ENCODE measurements at regions of chr10 and their contacts with region 1.

Region 1: DNA sequence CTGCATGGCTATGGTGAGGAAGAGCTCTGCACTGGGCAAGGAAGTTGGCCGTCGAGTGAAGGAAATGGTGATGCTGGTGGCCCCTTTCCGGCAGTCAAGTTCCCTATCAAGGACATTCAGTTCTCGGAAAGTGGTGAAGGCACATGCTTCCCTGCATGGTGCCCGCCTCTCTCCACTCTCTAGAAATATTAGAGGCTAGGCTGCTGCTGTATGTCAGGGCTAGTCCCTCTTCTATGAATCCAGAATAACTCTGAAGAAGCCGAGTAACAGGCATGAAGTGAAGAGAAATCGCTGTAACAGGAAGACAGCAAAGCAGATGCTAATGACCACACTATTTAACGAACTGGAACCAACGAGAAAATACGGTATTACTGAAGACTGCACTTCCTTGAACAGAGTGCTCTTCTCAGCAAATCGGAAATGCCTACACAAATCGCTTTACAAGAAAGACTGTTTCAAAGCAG is 5.4 kb downstream of the IDI1 start:
- DNase-seq: peak; percentile 30
- ATAC-seq: peak; percentile 55
- H3K4me3 Mint-ChIP-seq: peak overlapping the region; percentile 58
- H3K27ac Mint-ChIP-seq: peak overlapping the region; percentile 79
- H3K4me1 Mint-ChIP-seq: peaks cover 39% of the 10 kb centered on the region
- H3K27me3 Mint-ChIP-seq: no peaks in the 10 kb centered on the region
- CTCF ChIP-seq: no peak

Region 2: GRCh38 chr10:909831-910230 is 133.7 kb before region 1 on chr10:
- CTCF ChIA-PET with region 1: no interaction called
- POLR2A ChIA-PET with region 1: no interaction called
- intact Hi-C with region 1: no loop called
- DNase-seq: no peak
- ATAC-seq: no peak
- H3K4me3 Mint-ChIP-seq: no peak overlapping the region
- H3K27ac Mint-ChIP-seq: no peak overlapping the region
- H3K4me1 Mint-ChIP-seq: peaks cover 27% of the 10 kb centered on the region
- H3K27me3 Mint-ChIP-seq: no peaks in the 10 kb centered on the region
- CTCF ChIP-seq: no peak

Region 3: GRCh38 chr10:1056326-1057105 is 13.0 kb after region 1 on chr10 and contains the start of gene WDR37:
- CTCF ChIA-PET with region 1: interaction called, 3 read pairs
- POLR2A ChIA-PET with region 1: interaction called, 17 read pairs
- intact Hi-C with region 1: no loop called
- DNase-seq: peak; percentile 90
- ATAC-seq: peak; percentile 95
- H3K4me3 Mint-ChIP-seq: peak within 1 kb of the TSS; percentile 97
- H3K27ac Mint-ChIP-seq: peak within 1 kb of the TSS; percentile 93
- H3K4me1 Mint-ChIP-seq: peaks cover 73% of the 10 kb centered on the region
- H3K27me3 Mint-ChIP-seq: no peaks in the 10 kb centered on the region
- CTCF ChIP-seq: no peak
- total RNA-seq, gene WDR37: 17.2 to 17.9 TPM

Region 4: DNA sequence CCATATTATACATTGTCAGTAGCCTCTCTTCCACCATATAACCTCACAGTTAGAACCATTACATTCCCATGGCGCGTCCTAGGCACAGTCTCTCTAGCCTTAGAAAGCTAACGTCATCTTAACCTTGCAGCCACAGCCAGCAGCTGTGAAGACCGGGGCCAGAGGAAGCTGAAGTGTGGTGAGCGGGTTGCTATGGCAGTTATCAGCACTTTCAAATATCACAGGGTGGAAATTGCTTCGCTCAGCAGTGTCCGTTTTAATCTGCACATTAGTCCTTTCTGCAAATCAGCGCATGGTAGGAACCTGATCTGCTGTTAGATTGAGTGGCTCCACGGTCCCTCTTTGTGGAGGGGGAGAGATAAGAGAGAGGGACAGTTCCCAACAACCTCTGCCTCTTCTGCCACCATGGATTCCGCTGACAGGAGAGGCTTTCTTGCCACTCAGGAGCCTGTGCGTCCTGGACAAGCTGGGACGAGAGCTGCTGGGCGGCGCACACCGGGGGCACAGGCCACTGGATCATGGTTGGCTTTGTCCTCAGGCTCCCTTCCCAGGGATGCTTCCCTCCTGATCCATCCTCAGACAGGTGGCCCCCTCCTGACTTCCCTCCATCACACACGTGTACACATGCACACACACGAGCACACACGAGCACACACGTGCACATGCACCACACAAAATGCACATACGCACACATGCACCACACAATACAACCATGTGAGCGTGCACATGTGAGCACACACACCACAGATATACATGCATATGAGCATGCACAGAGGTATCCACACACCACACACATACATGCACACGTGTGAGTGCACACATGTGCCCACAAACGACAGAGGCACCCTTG is 106.5 kb after region 1 on chr10:
- CTCF ChIA-PET with region 1: no interaction called
- POLR2A ChIA-PET with region 1: no interaction called
- intact Hi-C with region 1: no loop called
- DNase-seq: peak; percentile 67
- ATAC-seq: peak; percentile 87
- H3K4me3 Mint-ChIP-seq: no peak overlapping the region
- H3K27ac Mint-ChIP-seq: no peak overlapping the region
- H3K4me1 Mint-ChIP-seq: peaks cover 15% of the 10 kb centered on the region
- H3K27me3 Mint-ChIP-seq: peaks cover 1% of the 10 kb centered on the region
- CTCF ChIP-seq: no peak

Measured in activated CD8-positive, alpha-beta T cell treated with anti-CD3 and anti-CD28 coated beads for 36 hours (primary cell).